Naive thymus-derived CD8-positive, alpha-beta T cell (primary cell): ENCODE measurements at regions of chr19 and their contacts with region 1.

Region 1: GRCh38 chr19:58386576-58387337 is at the start of gene RPS5:
- DNase-seq: peak; percentile 87 to 99 (median 96)
- ATAC-seq: peak; percentile 89 to 90
- H3K4me3 Mint-ChIP-seq: peak within 1 kb of the TSS; percentile 92 to 99 (median 95)
- H3K27ac Mint-ChIP-seq: peak within 1 kb of the TSS; percentile 97 to 100 (median 98)
- H3K4me1 Mint-ChIP-seq: peaks cover 14 to 58% (median 54%) of the 10 kb centered on the region in 4 donors
- H3K27me3 Mint-ChIP-seq: peaks cover 0 to 2% (median 0%) of the 10 kb centered on the region in 5 donors
- polyA plus RNA-seq, gene RPS5: 1,899 to 2,106 (median 2,080) TPM

Region 2: DNA sequence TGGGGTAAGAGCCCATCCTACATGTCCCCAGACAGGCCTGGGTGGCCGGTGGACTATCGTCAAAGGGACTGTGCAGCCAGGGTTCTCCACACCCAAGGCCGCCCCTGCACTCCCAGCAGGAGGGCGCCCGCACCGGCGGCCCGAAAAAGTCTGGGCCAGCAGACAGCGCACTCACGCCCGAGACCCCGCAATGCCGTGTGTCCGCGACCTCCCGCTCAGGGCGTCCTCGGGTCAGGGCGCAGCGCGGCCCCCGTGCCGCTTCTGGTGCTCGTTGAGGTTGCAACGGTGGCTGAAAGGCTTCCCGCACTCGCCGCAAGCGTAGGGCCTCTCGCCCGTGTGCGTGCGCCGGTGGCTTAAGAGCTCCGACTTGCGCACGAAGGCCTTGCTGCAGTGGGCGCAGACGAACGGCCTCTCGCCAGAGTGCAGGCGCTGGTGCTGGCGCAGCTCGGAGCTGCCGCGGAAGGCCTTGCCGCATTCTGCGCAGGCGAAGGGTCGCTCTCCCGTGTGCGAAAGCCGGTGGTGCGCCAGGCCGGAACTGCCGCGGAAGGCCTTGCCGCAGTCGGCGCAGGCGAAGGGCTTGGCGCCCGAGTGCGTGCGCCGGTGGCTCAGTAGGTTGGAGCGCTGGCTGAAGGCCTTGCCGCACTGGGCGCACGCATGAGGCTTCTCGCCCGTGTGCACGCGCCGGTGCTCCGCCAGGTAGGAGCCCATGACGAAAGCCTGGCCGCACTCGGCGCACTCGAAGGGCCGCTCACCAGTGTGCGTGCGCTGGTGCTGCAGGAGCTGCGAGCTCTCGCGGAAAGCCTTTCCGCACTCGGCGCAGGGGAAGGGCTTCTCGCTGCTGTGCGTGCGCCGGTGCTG is 30.6 kb before region 1 on chr19:
- POLR2A ChIA-PET with region 1: interaction called, 18 read pairs
- DNase-seq: peak; percentile 25 to 76 (median 54)
- ATAC-seq: peak; percentile 80 to 81
- H3K4me3 Mint-ChIP-seq: peak overlapping the region; percentile 65 to 85 (median 72)
- H3K27ac Mint-ChIP-seq: peak overlapping the region in 8 of 10 donors; percentile 37 to 87 (median 71)
- H3K4me1 Mint-ChIP-seq: peaks cover 13 to 36% (median 20%) of the 10 kb centered on the region in 4 donors
- H3K27me3 Mint-ChIP-seq: no peaks in the 10 kb centered on the region

Region 3: DNA sequence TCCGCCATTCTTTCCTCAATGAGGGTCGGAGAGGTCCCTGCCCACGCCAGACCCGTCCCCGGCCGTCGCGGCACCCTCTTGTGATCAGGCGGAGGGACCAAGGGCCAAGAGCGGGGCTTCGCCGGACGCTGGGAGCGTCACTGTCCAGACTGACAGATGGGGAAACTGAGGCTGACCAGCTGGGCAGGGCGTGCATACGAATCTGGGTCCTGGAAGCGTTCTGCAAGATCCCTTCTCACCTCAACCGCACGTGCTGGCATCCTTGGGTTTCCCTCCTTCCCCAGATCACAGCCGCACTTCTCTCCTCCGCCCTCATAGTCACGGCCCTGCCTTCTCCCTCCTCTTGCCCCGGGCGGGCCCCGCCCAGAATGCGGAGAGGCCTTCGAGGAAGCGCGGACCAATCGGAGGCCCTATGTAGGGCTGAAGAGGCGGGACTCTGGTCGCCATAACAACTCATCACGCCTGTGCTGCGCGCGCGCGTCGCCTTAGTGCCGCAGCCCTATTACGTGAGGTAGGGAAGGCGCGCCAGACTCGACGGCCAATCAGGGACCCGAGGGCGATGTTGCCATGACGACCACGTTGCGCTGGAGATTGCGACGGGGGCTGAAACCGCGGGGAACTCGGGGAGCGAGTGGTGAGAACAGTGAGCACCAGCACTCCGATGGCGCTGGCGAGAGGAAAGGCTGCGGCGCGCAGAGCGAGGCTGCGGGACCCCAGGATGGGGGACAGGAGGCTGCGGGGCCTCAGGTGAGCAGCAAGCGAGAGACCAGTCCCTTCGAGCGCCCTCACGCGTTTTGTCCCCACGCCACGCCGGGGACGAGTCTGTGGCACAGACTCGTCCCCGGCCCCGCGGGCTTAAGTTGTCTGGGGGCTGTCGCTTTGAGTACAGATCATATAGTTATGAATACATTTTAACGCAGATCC is 14.4 kb after region 1 on chr19:
- POLR2A ChIA-PET with region 1: interaction called, 25 read pairs
- DNase-seq: peak; percentile 96 to 100 (median 99)
- ATAC-seq: peak; percentile 92 to 97
- H3K4me3 Mint-ChIP-seq: peak overlapping the region; percentile 81 to 97 (median 92)
- H3K27ac Mint-ChIP-seq: peak overlapping the region; percentile 73 to 99 (median 94)
- H3K4me1 Mint-ChIP-seq: peaks cover 14 to 20% (median 15%) of the 10 kb centered on the region in 4 donors
- H3K27me3 Mint-ChIP-seq: peaks cover 0 to 23% (median 8%) of the 10 kb centered on the region in 5 donors